ENCODE measurements at regions of chrX and their contacts with region 1.

Region 1: GRCh38 chrX:72620550-72621145 is 48.0 kb upstream of the HDAC8 start:
- DNase-seq: peak; percentile 4
- H3K4me3 Mint-ChIP-seq: peak overlapping the region; percentile 78
- H3K27ac Mint-ChIP-seq: peak overlapping the region; percentile 97
- H3K4me1 Mint-ChIP-seq: peaks cover 29% of the 10 kb centered on the region
- H3K27me3 Mint-ChIP-seq: peaks cover 3% of the 10 kb centered on the region

Region 2: DNA sequence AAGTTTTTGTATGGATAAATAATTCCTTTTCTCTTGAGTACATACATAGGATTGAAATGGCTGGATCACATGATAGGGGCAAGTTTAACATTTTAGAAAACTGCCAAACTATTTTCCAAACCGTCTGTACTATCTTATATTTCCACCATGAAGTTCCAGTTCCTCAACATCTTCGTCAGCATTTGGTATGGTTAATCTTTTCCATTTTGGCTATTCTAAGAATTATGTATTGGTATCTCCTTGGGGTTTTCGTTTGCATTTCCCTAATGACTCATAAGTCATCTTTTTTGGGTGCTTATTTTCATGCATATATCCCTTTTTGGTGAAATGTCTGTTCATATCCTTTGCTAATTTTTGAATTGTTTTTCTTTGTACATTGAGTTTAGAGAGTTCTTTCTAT is 1948.3 kb before region 1 on chrX:
- intact Hi-C with region 1: loop called (anchors 5 kb)
- DNase-seq: no peak
- H3K4me3 Mint-ChIP-seq: peak overlapping the region; percentile 45
- H3K27ac Mint-ChIP-seq: peak overlapping the region; percentile 90
- H3K4me1 Mint-ChIP-seq: peaks cover 32% of the 10 kb centered on the region
- H3K27me3 Mint-ChIP-seq: no peaks in the 10 kb centered on the region

Region 3: DNA sequence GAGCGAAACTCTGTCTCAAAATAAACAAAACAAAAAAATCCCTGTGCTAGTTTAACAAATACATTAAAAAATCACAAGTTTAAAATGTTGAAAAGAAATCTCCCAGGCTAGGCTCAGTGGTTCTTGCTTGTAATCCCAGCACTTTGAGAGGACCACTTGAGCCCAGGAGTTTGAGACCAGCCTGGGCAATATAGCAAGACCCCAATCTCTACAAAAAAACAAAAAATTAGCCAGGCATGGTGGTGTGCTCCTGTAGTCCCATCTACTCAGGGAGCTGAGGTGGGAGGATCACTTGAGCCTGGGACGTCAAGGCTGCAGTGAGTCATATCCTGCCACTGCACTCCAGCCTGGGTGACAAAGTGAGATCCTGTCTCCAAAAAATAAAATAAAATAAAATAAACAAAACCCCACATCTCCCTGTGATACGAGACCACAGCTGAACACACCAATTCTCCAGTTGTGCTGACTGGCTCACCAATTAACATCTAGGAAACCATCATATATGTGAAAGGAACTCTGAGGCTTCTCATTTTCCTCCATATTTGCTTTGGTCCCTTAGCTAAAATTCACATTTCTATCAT is 350.9 kb before region 1 on chrX:
- intact Hi-C with region 1: loop called (anchors 1 kb)
- DNase-seq: peak; percentile 1
- H3K4me3 Mint-ChIP-seq: peak overlapping the region; percentile 68
- H3K27ac Mint-ChIP-seq: peak overlapping the region; percentile 91
- H3K4me1 Mint-ChIP-seq: peaks cover 39% of the 10 kb centered on the region
- H3K27me3 Mint-ChIP-seq: no peaks in the 10 kb centered on the region

Region 4: GRCh38 chrX:72349190-72349589 is 271.5 kb before region 1 on chrX:
- intact Hi-C with region 1: loop called (anchors 1 kb)
- DNase-seq: peak; percentile 0
- H3K4me3 Mint-ChIP-seq: peak overlapping the region; percentile 59
- H3K27ac Mint-ChIP-seq: peak overlapping the region; percentile 82
- H3K4me1 Mint-ChIP-seq: peaks cover 25% of the 10 kb centered on the region
- H3K27me3 Mint-ChIP-seq: no peaks in the 10 kb centered on the region

Region 5: DNA sequence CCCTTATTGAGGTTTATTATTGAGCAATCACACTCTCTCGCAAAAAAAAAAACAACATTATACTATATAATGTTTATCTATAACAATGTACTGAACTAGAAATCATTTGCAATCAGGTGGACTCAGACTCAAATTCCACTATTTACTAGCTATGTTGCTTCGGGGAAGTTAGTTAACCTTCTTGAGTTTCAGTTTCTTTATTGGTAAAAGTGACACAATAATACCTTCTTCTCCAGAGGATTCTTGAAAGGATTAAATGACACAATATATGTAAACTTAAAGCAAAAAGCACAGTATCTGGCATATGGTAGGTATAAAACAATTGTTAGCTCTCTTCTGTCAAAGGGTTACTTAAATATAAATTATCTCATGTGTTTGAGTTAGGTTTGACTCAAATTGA is 16.5 kb before region 1 on chrX:
- intact Hi-C with region 1: loop called (anchors 1 kb)
- DNase-seq: no peak
- H3K4me3 Mint-ChIP-seq: no peak overlapping the region
- H3K27ac Mint-ChIP-seq: no peak overlapping the region
- H3K4me1 Mint-ChIP-seq: peaks cover 23% of the 10 kb centered on the region
- H3K27me3 Mint-ChIP-seq: no peaks in the 10 kb centered on the region